GM12878 (cell line): ENCODE measurements at regions of chr22 and their contacts with region 1.

Region 1: GRCh38 chr22:36470162-36470993 is 11.1 kb downstream of the TXN2 start:
- DNase-seq: no peak
- ATAC-seq: peak; percentile 99
- H3K4me3 ChIP-seq: no peak overlapping the region
- H3K27ac ChIP-seq: no peak overlapping the region
- H3K4me1 ChIP-seq: peaks cover 4% of the 10 kb centered on the region
- H3K27me3 ChIP-seq: no peaks in the 10 kb centered on the region
- CTCF ChIP-seq: peak; percentile 96 to 98 (median 98)
- EP300 ChIP-seq: no peak
- POLR2A ChIP-seq: peak; percentile 40; the same call in 1 of the 2 replicates
- RAD21 ChIP-seq: peak; percentile 96

Region 2: GRCh38 chr22:36301384-36301828 is 169.0 kb before region 1 on chr22:
- CTCF ChIA-PET with region 1: interaction called, 125 read pairs
- POLR2A ChIA-PET with region 1: interaction called, 5 read pairs
- RAD21 ChIA-PET with region 1: interaction called, 107 read pairs
- SMC1A ChIA-PET with region 1: interaction called, 70 read pairs
- in situ Hi-C with region 1: loop called (anchors 5 kb)
- intact Hi-C with region 1: loop called (anchors 1 kb)
- DNase-seq: no peak
- ATAC-seq: peak; percentile 91
- H3K4me3 ChIP-seq: no peak overlapping the region
- H3K27ac ChIP-seq: no peak overlapping the region
- H3K4me1 ChIP-seq: no peaks in the 10 kb centered on the region
- H3K27me3 ChIP-seq: no peaks in the 10 kb centered on the region
- CTCF ChIP-seq: peak; percentile 92 to 95 (median 92)
- EP300 ChIP-seq: no peak
- POLR2A ChIP-seq: peak; percentile 69
- RAD21 ChIP-seq: peak; percentile 78

Region 3: DNA sequence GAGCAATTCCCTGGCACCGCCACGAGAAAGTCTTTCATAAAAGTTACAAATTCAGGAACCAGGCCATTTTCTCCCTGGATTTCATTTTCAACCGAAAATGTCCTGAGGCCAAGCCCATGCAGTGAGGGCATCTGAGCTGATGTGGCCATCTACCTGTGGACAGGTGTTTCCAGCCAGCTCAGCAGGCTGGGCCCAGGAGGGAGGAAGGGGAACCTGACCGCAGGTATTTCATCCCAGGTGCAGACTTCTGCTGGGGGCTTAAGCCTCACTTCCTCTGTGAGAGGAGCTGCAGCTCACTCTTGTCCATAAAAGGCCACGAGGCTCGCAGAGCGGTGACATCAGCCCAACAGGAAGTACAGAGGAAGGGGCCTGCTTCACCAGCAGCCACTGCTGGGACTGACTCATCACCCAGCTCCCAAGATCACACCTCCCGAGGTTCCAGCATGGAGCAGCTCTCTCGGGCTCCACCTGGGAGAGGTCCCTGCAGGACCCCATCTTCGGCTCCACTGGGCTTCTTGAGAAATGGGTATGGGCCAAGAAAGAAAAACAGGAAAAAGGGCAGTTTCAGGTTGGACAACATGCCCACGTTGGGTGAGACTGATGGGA is 139.0 kb before region 1 on chr22:
- CTCF ChIA-PET with region 1: interaction called, 17 read pairs
- POLR2A ChIA-PET with region 1: interaction called, 3 read pairs
- RAD21 ChIA-PET with region 1: interaction called, 14 read pairs
- SMC1A ChIA-PET with region 1: interaction called, 7 read pairs
- in situ Hi-C with region 1: no loop called
- intact Hi-C with region 1: no loop called
- DNase-seq: peak; percentile 81
- ATAC-seq: peak; percentile 83
- H3K4me3 ChIP-seq: peak overlapping the region; percentile 59; the same call in 1 of the 2 replicates
- H3K27ac ChIP-seq: peak overlapping the region; percentile 99
- H3K4me1 ChIP-seq: peaks cover 59% of the 10 kb centered on the region
- H3K27me3 ChIP-seq: no peaks in the 10 kb centered on the region
- CTCF ChIP-seq: no peak
- EP300 ChIP-seq: peak in 1 of 2 experiments; percentile 77; a peak in 2 of 4 replicates
- POLR2A ChIP-seq: peak; percentile 58
- RAD21 ChIP-seq: no peak

Region 4: GRCh38 chr22:36369922-36370791 is 100.2 kb before region 1 on chr22:
- CTCF ChIA-PET with region 1: interaction called, 10 read pairs
- POLR2A ChIA-PET with region 1: no interaction called
- RAD21 ChIA-PET with region 1: interaction called, 4 read pairs
- SMC1A ChIA-PET with region 1: interaction called, 7 read pairs
- in situ Hi-C with region 1: no loop called
- intact Hi-C with region 1: no loop called
- DNase-seq: no peak
- ATAC-seq: peak; percentile 64
- H3K4me3 ChIP-seq: peak overlapping the region; percentile 20; the same call in 1 of the 2 replicates
- H3K27ac ChIP-seq: peak overlapping the region; percentile 1
- H3K4me1 ChIP-seq: peaks cover 73% of the 10 kb centered on the region
- H3K27me3 ChIP-seq: no peaks in the 10 kb centered on the region
- CTCF ChIP-seq: no peak
- EP300 ChIP-seq: no peak
- POLR2A ChIP-seq: no peak; the same call in 1 of the 2 replicates
- RAD21 ChIP-seq: no peak

Region 5: GRCh38 chr22:36435516-36436415 is 34.6 kb before region 1 on chr22:
- CTCF ChIA-PET with region 1: interaction called, 4 read pairs
- POLR2A ChIA-PET with region 1: no interaction called
- RAD21 ChIA-PET with region 1: interaction called, 10 read pairs
- SMC1A ChIA-PET with region 1: no interaction called
- in situ Hi-C with region 1: no loop called
- intact Hi-C with region 1: no loop called
- DNase-seq: peak; percentile 52
- ATAC-seq: peak; percentile 84
- H3K4me3 ChIP-seq: no peak overlapping the region
- H3K27ac ChIP-seq: no peak overlapping the region
- H3K4me1 ChIP-seq: peaks cover 21% of the 10 kb centered on the region
- H3K27me3 ChIP-seq: no peaks in the 10 kb centered on the region
- CTCF ChIP-seq: no peak
- EP300 ChIP-seq: no peak
- POLR2A ChIP-seq: no peak
- RAD21 ChIP-seq: 0 out of 2 replicates have a peak, but pooled peaks have one; percentile 7

Region 6: GRCh38 chr22:36481393-36482168 is 11.2 kb after region 1 on chr22 and contains the start of gene TXN2:
- CTCF ChIA-PET with region 1: interaction called, 16 read pairs
- POLR2A ChIA-PET with region 1: no interaction called
- RAD21 ChIA-PET with region 1: interaction called, 9 read pairs
- SMC1A ChIA-PET with region 1: interaction called, 4 read pairs
- in situ Hi-C with region 1: no loop called
- intact Hi-C with region 1: no loop called
- DNase-seq: peak; percentile 82
- ATAC-seq: peak; percentile 94
- H3K4me3 ChIP-seq: peak within 1 kb of the TSS; percentile 96
- H3K27ac ChIP-seq: peak within 1 kb of the TSS; percentile 95
- H3K4me1 ChIP-seq: peaks cover 6% of the 10 kb centered on the region
- H3K27me3 ChIP-seq: no peaks in the 10 kb centered on the region
- CTCF ChIP-seq: no peak
- EP300 ChIP-seq: no peak
- POLR2A ChIP-seq: peak; percentile 99
- RAD21 ChIP-seq: no peak
- polyA plus RNA-seq, gene TXN2: 330 to 350 TPM

Region 7: DNA sequence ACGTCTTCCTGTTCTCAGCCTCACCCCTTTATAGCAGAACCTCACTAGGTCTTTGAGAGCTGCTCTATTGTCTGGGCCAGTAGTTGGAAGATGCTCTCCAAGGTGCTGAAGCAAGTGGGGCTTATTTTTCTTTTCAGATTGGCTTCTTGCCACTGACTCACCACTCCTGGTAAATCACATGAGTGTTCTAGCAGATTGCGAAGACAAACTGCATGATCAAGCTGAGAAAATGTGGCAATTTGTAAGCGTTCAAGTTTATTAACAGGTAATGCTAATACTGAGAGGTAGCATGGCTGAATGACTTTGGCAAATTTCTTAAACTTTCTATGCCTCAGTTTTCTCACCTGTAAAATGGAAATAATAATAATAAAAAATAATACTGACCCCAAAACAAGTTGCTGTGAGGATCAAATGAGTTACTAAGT is 174.0 kb after region 1 on chr22:
- CTCF ChIA-PET with region 1: no interaction called
- POLR2A ChIA-PET with region 1: no interaction called
- RAD21 ChIA-PET with region 1: no interaction called
- SMC1A ChIA-PET with region 1: no interaction called
- in situ Hi-C with region 1: no loop called
- intact Hi-C with region 1: no loop called
- DNase-seq: no peak
- ATAC-seq: peak; percentile 27; the same call in 1 of the 3 replicates
- H3K4me3 ChIP-seq: no peak overlapping the region
- H3K27ac ChIP-seq: no peak overlapping the region
- H3K4me1 ChIP-seq: no peaks in the 10 kb centered on the region
- H3K27me3 ChIP-seq: no peaks in the 10 kb centered on the region; a peak in 2 of 4 replicates
- CTCF ChIP-seq: no peak
- EP300 ChIP-seq: no peak
- POLR2A ChIP-seq: no peak
- RAD21 ChIP-seq: no peak